ENCODE measurements at regions of chr14 and their contacts with region 1.

Region 1: DNA sequence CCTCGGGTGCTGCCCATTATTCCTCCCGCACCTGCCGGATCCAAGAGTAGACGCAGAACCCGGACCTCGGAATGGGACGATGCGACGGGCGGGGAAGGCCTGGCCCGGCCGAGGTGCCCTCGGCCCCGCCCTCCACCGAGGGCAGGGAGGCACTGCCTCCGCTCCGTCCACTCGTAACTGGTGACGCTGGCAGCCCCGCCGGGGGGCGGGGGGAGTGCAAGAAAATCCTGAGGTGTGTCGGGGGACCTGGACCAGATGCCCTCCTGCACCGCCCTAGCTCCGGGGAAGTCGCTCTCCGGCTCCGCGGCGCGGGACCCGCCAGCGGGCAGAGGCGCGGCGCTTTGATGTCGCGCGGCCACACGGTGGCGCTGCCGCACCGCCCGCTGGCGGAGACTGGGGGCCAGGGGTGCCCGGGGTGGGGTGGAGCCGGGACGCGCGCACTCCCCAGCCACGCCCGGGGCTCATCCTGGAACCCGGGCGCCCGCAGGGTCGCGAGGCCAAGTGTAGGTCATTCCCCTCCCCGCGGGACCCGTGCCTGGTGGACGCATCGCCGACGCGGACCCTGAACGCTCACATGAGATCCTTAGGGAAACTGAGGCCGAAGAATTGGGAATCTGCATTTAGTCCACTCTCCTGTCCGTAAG is 202.8 kb downstream of the TTC8 start:
- DNase-seq: peak; percentile 16 to 79 (median 49)
- ATAC-seq: peak; percentile 88 to 92 (median 91)
- H3K4me3 ChIP-seq: peak overlapping the region; percentile 49 to 75
- H3K4me3 Mint-ChIP-seq: peak overlapping the region; percentile 60 to 63 (median 61)
- H3K27ac ChIP-seq: no peak overlapping the region
- H3K27ac Mint-ChIP-seq: no peak overlapping the region
- H3K4me1 ChIP-seq: peaks cover 0 to 18% of the 10 kb centered on the region in 2 experiments
- H3K4me1 Mint-ChIP-seq: peaks cover 0 to 6% (median 0%) of the 10 kb centered on the region in 3 donors
- H3K27me3 ChIP-seq: peaks cover 0 to 63% of the 10 kb centered on the region in 2 experiments
- H3K27me3 Mint-ChIP-seq: peaks cover 62 to 63% of the 10 kb centered on the region in 2 donors

Region 2: DNA sequence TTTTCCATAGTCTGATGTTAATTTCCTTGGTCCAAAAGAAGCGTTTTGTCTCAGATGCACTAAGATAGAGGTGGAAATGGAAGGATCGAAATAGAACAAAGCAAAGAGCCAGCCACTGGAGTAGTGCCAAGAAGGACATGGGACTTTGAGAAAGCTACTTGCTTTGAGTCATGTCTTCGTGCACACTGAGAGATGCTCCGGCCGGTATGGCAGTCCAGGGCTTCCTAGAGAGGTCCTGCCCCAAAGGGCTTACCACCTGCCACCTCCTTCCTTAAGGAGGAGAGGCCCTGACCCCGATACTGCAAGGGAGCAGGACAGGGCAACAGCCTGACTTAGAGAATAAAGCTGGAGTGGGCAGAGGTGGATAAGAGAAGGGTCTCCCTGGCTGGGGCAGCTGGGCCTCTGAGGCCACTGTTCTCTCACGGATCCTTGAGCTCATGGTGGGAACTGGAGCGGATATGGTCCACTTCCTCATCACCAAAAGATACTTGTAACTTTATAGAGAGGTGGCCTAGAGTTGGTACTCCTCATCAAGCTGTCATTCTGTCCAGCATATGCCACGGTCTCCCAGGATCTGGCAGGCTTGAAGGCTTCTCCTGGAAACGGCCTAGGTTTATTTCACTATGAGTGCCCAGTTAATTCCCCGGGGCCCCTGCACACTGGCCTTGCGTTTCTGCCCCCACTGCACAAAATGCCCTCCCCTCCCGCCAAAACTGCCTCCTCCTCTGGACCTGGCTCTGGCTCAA is 332.4 kb after region 1 on chr14:
- CTCF ChIA-PET with region 1: interaction called in 1 of 2 experiments, 12 read pairs
- POLR2A ChIA-PET with region 1: no interaction called
- DNase-seq: no peak
- ATAC-seq: no peak
- H3K4me3 ChIP-seq: no peak overlapping the region
- H3K4me3 Mint-ChIP-seq: no peak overlapping the region
- H3K27ac ChIP-seq: no peak overlapping the region
- H3K27ac Mint-ChIP-seq: peak overlapping the region; percentile 36 to 73
- H3K4me1 ChIP-seq: peaks cover 15 to 25% of the 10 kb centered on the region in 2 experiments
- H3K4me1 Mint-ChIP-seq: peaks cover 45 to 50% (median 48%) of the 10 kb centered on the region in 3 donors
- H3K27me3 ChIP-seq: no peaks in the 10 kb centered on the region
- H3K27me3 Mint-ChIP-seq: no peaks in the 10 kb centered on the region

Region 3: GRCh38 chr14:89977668-89978067 is 950.4 kb after region 1 on chr14:
- CTCF ChIA-PET with region 1: no interaction called
- POLR2A ChIA-PET with region 1: no interaction called
- DNase-seq: no peak
- ATAC-seq: no peak
- H3K4me3 ChIP-seq: no peak overlapping the region
- H3K4me3 Mint-ChIP-seq: no peak overlapping the region
- H3K27ac ChIP-seq: no peak overlapping the region
- H3K27ac Mint-ChIP-seq: no peak overlapping the region
- H3K4me1 ChIP-seq: no peaks in the 10 kb centered on the region
- H3K4me1 Mint-ChIP-seq: peaks cover 0 to 3% (median 0%) of the 10 kb centered on the region in 3 donors
- H3K27me3 ChIP-seq: no peaks in the 10 kb centered on the region
- H3K27me3 Mint-ChIP-seq: no peaks in the 10 kb centered on the region

Measured in T-cell (primary cell).